B cell (primary cell): ENCODE measurements at regions of chr6 and their contacts with region 1.

Region 1: GRCh38 chr6:27132532-27133280 is 114.8 kb upstream of the PRSS16 start:
- DNase-seq: no peak
- ATAC-seq: peak; percentile 84
- H3K4me3 ChIP-seq: peak overlapping the region; percentile 70 to 81 (median 74)
- H3K4me3 Mint-ChIP-seq: no peak overlapping the region
- H3K27ac ChIP-seq: peak overlapping the region; percentile 83
- H3K27ac Mint-ChIP-seq: no peak overlapping the region
- H3K4me1 ChIP-seq: peaks cover 14 to 24% of the 10 kb centered on the region in 2 donors
- H3K4me1 Mint-ChIP-seq: peaks cover 23% of the 10 kb centered on the region
- H3K27me3 ChIP-seq: no peaks in the 10 kb centered on the region
- H3K27me3 Mint-ChIP-seq: no peaks in the 10 kb centered on the region
- CTCF ChIP-seq: no peak

Region 2: DNA sequence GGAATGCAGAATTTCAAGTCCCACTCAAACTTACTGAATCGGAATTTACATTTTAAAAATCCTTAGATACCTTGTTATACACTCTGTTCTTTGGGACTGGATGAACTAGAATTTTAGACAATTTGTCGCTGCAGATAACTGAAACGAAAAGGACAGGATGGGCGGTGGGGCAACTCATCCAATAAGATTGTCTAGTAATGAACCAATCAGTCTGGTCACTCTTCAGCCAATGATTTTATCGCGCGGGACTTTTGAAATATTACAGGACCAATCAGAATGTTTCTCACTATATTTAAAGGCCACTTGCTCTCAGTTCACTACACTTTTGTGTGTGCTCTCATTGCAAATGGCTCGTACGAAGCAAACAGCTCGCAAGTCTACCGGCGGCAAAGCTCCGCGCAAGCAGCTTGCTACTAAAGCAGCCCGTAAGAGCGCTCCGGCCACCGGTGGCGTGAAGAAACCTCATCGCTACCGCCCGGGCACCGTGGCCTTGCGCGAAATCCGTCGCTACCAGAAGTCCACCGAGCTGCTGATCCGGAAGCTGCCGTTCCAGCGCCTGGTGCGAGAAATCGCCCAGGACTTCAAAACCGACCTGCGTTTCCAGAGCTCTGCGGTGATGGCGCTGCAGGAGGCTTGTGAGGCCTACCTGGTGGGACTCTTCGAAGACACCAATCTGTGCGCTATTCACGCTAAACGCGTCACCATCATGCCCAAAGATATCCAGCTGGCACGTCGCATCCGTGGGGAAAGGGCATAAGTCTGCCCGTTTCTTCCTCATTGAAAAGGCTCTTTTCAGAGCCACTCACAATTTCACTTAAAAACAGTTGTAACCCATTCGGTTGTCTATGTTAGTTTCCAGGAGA is 1087.4 kb before region 1 on chr6:
- CTCF ChIA-PET with region 1: no interaction called
- POLR2A ChIA-PET with region 1: interaction called, 4 read pairs
- intact Hi-C with region 1: loop called (anchors 5 kb)
- DNase-seq: peak; percentile 90
- ATAC-seq: peak; percentile 58
- H3K4me3 ChIP-seq: peak overlapping the region; percentile 56 to 98 (median 69)
- H3K4me3 Mint-ChIP-seq: peak overlapping the region; percentile 87
- H3K27ac ChIP-seq: peak overlapping the region; percentile 85 to 89
- H3K27ac Mint-ChIP-seq: peak overlapping the region; percentile 99
- H3K4me1 ChIP-seq: peaks cover 14 to 29% of the 10 kb centered on the region in 2 donors
- H3K4me1 Mint-ChIP-seq: peaks cover 17% of the 10 kb centered on the region
- H3K27me3 ChIP-seq: no peaks in the 10 kb centered on the region
- H3K27me3 Mint-ChIP-seq: no peaks in the 10 kb centered on the region
- CTCF ChIP-seq: no peak

Region 3: DNA sequence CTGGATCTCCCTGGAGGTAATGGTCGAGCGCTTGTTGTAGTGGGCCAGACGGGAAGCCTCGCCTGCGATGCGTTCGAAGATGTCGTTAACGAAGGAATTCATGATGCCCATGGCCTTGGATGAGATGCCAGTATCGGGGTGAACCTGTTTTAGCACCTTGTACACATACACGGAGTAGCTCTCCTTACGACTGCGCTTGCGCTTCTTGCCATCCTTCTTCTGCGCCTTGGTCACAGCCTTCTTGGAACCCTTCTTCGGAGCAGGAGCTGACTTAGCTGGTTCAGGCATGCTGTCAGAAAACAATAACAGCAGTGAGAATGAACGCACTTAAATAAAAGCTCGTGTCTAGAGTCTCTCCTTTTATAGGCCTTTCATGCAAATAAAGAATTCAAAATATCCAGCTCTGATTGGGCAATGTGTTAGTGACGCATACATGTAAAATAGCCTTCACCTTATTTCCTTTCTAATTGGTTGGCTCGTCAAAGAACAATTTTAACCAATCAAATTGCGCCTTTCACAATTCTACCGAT is 916.3 kb before region 1 on chr6:
- CTCF ChIA-PET with region 1: no interaction called
- POLR2A ChIA-PET with region 1: interaction called, 12 read pairs
- intact Hi-C with region 1: no loop called
- DNase-seq: peak; percentile 96
- ATAC-seq: peak; percentile 80
- H3K4me3 ChIP-seq: peak overlapping the region; percentile 70 to 93 (median 74)
- H3K4me3 Mint-ChIP-seq: no peak overlapping the region
- H3K27ac ChIP-seq: peak overlapping the region; percentile 81 to 82
- H3K27ac Mint-ChIP-seq: no peak overlapping the region
- H3K4me1 ChIP-seq: peaks cover 15 to 26% of the 10 kb centered on the region in 2 donors
- H3K4me1 Mint-ChIP-seq: peaks cover 19% of the 10 kb centered on the region
- H3K27me3 ChIP-seq: no peaks in the 10 kb centered on the region
- H3K27me3 Mint-ChIP-seq: no peaks in the 10 kb centered on the region
- CTCF ChIP-seq: no peak

Region 4: DNA sequence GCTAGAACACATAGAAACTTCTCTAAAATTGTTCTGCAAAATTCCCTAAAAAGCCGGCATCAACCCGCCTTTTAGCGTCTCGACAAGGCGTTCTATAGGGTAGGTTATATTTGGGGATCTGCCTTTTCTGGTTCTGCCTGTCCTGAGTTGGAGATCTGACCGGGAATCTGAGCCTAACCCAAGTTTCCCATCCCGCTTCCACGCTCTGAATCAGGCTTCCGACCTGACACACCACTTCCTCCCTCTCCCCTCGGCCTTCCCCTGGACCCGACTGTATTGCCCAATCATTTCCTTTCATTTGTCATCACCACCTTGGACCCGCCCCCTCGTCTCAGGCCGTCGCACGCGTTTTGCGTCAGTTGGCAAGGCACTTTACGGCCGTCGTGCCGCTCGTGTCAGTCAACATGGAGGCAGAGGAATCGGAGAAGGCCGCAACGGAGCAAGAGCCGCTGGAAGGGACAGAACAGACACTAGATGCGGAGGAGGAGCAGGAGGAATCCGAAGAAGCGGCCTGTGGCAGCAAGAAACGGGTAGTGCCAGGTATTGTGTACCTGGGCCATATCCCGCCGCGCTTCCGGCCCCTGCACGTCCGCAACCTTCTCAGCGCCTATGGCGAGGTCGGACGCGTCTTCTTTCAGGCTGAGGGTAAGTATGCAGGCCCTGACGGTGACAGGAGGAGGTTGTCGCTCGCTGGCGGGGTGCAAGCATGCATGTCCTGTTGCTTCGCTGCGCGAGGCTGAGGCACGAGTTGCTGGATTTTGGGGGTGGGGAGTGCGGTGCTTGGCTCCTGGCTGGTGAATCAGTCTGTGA is 535.9 kb before region 1 on chr6 and contains the start of gene ABT1:
- CTCF ChIA-PET with region 1: no interaction called
- POLR2A ChIA-PET with region 1: no interaction called
- intact Hi-C with region 1: loop called (anchors 2 kb)
- DNase-seq: peak; percentile 98
- ATAC-seq: peak; percentile 93
- H3K4me3 ChIP-seq: peak within 1 kb of the TSS; percentile 84 to 99 (median 91)
- H3K4me3 Mint-ChIP-seq: no peak within 1 kb of the TSS
- H3K27ac ChIP-seq: peak within 1 kb of the TSS; percentile 88 to 89
- H3K27ac Mint-ChIP-seq: no peak within 1 kb of the TSS
- H3K4me1 ChIP-seq: peaks cover 14 to 24% of the 10 kb centered on the region in 2 donors
- H3K4me1 Mint-ChIP-seq: peaks cover 20% of the 10 kb centered on the region
- H3K27me3 ChIP-seq: peaks cover 2 to 20% (median 9%) of the 10 kb centered on the region in 4 experiments
- H3K27me3 Mint-ChIP-seq: peaks cover 8% of the 10 kb centered on the region
- CTCF ChIP-seq: no peak
- total RNA-seq, gene ABT1: 28.6 and 29.8 TPM in 2 replicates

Region 5: DNA sequence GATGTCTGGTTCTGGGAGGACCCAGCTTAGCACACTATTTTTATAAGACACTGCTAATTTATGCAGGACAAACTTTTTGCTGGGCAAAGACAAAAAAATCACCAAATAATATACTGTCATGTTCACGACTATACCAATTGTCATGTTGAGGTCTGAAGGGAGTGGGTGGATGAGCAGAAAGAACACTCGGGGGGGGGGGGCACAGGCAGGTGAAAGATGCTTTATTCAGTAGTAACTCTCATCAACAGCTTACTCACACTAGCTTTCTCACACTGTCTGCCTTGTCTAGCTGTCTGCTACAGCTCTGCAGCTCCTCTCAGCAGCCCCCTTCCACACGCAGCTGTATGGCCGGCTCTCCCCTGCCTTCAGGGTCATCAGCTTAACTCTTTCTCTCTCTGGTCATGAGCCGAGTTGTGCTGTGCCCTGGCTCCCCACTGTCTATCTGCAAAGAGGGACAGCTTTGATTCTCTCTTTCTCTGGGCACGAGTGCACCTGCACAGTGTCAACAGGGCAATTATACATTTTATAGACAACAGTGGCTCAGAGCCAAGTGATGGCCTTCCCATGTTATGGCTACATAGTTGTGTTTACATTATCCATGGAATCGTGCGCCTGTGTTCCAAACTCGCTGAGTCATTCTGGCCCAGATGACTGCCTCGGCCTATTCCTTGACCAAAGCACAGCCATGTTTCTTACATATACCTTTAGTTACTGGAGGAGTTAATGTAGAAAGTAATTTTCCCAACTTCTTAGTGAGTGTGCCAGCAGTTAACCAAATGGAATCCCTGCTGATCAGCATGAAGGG is 72.9 kb before region 1 on chr6:
- CTCF ChIA-PET with region 1: no interaction called
- POLR2A ChIA-PET with region 1: no interaction called
- intact Hi-C with region 1: no loop called
- DNase-seq: no peak
- ATAC-seq: no peak
- H3K4me3 ChIP-seq: no peak overlapping the region
- H3K4me3 Mint-ChIP-seq: no peak overlapping the region
- H3K27ac ChIP-seq: no peak overlapping the region
- H3K27ac Mint-ChIP-seq: no peak overlapping the region
- H3K4me1 ChIP-seq: no peaks in the 10 kb centered on the region
- H3K4me1 Mint-ChIP-seq: no peaks in the 10 kb centered on the region
- H3K27me3 ChIP-seq: peaks cover 0 to 8% (median 0%) of the 10 kb centered on the region in 4 experiments
- H3K27me3 Mint-ChIP-seq: peaks cover 31% of the 10 kb centered on the region
- CTCF ChIP-seq: no peak

Region 6: DNA sequence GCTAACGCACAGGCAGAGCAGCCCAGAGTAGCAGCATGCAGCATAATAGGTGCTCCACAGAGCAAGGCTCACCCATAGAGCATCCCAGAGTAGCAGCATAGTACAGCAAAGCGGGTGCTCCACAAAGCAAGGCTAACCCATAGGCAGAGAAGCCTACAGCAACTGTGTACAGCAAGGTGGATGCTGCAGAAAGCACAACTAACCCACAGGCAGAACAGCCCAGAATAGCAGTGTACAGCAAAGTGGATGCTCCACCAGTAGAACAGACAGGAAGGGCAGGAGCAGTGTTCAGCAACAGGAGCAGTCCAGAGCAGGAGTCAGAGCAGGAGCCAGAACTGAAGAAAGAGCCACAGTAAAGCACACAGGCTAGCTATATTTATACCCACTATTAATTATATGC is 17.9 kb before region 1 on chr6:
- CTCF ChIA-PET with region 1: no interaction called
- POLR2A ChIA-PET with region 1: no interaction called
- intact Hi-C with region 1: no loop called
- DNase-seq: no peak
- ATAC-seq: no peak
- H3K4me3 ChIP-seq: no peak overlapping the region
- H3K4me3 Mint-ChIP-seq: no peak overlapping the region
- H3K27ac ChIP-seq: no peak overlapping the region
- H3K27ac Mint-ChIP-seq: no peak overlapping the region
- H3K4me1 ChIP-seq: no peaks in the 10 kb centered on the region
- H3K4me1 Mint-ChIP-seq: no peaks in the 10 kb centered on the region
- H3K27me3 ChIP-seq: peaks cover 0 to 8% (median 0%) of the 10 kb centered on the region in 4 experiments
- H3K27me3 Mint-ChIP-seq: peaks cover 25% of the 10 kb centered on the region
- CTCF ChIP-seq: no peak

Region 7: DNA sequence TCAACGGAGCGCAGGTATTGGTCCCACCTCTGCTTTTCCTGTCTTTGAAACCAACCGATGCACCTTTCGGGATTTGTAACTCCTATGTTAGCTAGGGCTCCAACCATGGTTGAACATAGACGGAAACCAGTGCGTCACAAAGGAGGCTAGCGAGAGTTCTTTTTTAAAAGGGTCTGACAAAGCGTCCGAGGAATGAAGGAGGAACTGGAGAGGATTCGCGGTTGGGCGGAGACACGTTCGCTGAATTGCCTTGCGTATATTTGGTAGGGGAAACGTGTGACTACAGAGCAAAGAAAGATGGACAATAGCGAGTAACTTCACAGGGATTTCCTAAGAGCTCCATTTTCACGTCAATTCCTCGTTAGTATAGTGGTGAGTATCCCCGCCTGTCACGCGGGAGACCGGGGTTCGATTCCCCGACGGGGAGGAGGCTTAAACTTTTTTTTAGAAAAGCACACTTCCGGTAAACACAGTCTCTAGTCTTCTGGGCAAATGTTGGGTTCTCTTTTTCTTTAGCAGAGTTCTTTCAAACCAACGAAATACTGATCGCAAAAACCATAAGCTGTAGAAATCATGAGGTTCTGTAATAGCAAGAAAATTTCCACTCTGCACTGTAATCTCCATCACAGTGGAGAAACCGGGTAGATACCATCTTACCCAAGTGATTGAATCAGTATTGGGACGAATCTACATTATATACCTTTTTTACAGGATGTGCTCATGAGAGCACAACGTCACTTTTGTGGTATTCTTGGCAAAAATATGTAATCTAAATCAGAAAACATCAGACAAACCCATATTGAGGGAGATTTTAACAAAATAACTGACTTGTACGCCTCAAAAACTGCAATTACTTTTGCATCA is 346.8 kb after region 1 on chr6:
- CTCF ChIA-PET with region 1: no interaction called
- POLR2A ChIA-PET with region 1: no interaction called
- intact Hi-C with region 1: loop called (anchors 5 kb)
- DNase-seq: peak; percentile 96
- ATAC-seq: peak; percentile 77
- H3K4me3 ChIP-seq: peak overlapping the region; percentile 88 to 97 (median 95)
- H3K4me3 Mint-ChIP-seq: no peak overlapping the region
- H3K27ac ChIP-seq: peak overlapping the region; percentile 98
- H3K27ac Mint-ChIP-seq: no peak overlapping the region
- H3K4me1 ChIP-seq: peaks cover 15 to 17% of the 10 kb centered on the region in 2 donors
- H3K4me1 Mint-ChIP-seq: peaks cover 6% of the 10 kb centered on the region
- H3K27me3 ChIP-seq: no peaks in the 10 kb centered on the region
- H3K27me3 Mint-ChIP-seq: no peaks in the 10 kb centered on the region
- CTCF ChIP-seq: no peak

Region 8: GRCh38 chr6:27871924-27872638 is 739.4 kb after region 1 on chr6:
- CTCF ChIA-PET with region 1: no interaction called
- POLR2A ChIA-PET with region 1: interaction called, 20 read pairs
- intact Hi-C with region 1: loop called (anchors 2 kb)
- DNase-seq: peak; percentile 98
- ATAC-seq: peak; percentile 76
- H3K4me3 ChIP-seq: peak overlapping the region; percentile 66 to 99 (median 76)
- H3K4me3 Mint-ChIP-seq: peak overlapping the region; percentile 84
- H3K27ac ChIP-seq: peak overlapping the region; percentile 79 to 88
- H3K27ac Mint-ChIP-seq: peak overlapping the region; percentile 98
- H3K4me1 ChIP-seq: peaks cover 20 to 34% of the 10 kb centered on the region in 2 donors
- H3K4me1 Mint-ChIP-seq: peaks cover 30% of the 10 kb centered on the region
- H3K27me3 ChIP-seq: no peaks in the 10 kb centered on the region
- H3K27me3 Mint-ChIP-seq: no peaks in the 10 kb centered on the region
- CTCF ChIP-seq: peak; percentile 56